ENCODE measurements at regions of chr10 and their contacts with region 1.

Region 1: DNA sequence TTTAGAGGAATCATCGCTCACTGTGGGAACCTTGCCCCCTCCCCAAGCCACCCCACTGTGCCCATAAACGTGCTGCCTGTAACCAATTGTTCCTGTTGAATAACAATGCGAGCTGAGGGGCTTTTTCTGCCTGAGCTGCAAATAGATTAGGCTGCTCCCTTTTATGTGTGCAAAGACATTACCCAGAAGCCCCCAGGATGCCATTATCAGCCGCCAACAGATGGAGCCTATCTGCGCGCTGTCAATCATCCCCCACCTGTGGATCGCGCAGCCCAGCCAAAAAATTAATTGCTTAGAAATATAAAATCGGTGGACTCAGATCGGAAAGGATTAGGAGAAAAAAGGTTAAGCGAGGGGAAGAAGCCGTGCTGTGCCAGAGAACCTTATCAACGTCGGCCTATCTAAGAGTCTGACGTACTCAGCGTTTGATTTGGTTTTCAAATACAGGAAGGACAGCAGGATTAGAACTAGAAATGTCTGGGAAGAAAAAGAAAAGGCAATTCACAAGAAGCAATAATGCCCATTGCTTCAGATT is 167.3 kb upstream of the MYO3A start:
- DNase-seq: peak; percentile 66 to 82 (median 76)
- ATAC-seq: peak; percentile 92
- H3K4me3 ChIP-seq: peak overlapping the region; percentile 6; the same call in 1 of the 2 replicates
- H3K27ac ChIP-seq: no peak overlapping the region
- H3K4me1 ChIP-seq: peaks cover 0 to 7% of the 10 kb centered on the region in 2 experiments; a peak in 2 of 5 replicates
- H3K27me3 ChIP-seq: no peaks in the 10 kb centered on the region
- CTCF ChIP-seq: no peak
- EP300 ChIP-seq: peak; percentile 91
- POLR2A ChIP-seq: no peak
- RAD21 ChIP-seq: no peak

Region 2: GRCh38 chr10:25786161-25786560 is 19.4 kb after region 1 on chr10:
- CTCF ChIA-PET with region 1: no interaction called
- POLR2A ChIA-PET with region 1: no interaction called
- in situ Hi-C with region 1: no loop called
- intact Hi-C with region 1: loop called (anchors 1 kb)
- DNase-seq: no peak
- ATAC-seq: no peak
- H3K4me3 ChIP-seq: no peak overlapping the region
- H3K27ac ChIP-seq: no peak overlapping the region
- H3K4me1 ChIP-seq: no peaks in the 10 kb centered on the region
- H3K27me3 ChIP-seq: no peaks in the 10 kb centered on the region; a peak in 2 of 5 replicates
- CTCF ChIP-seq: no peak
- EP300 ChIP-seq: no peak
- POLR2A ChIP-seq: no peak
- RAD21 ChIP-seq: no peak